T-cell (primary cell): ENCODE measurements at regions of chr2 and their contacts with region 1.

Region 1: DNA sequence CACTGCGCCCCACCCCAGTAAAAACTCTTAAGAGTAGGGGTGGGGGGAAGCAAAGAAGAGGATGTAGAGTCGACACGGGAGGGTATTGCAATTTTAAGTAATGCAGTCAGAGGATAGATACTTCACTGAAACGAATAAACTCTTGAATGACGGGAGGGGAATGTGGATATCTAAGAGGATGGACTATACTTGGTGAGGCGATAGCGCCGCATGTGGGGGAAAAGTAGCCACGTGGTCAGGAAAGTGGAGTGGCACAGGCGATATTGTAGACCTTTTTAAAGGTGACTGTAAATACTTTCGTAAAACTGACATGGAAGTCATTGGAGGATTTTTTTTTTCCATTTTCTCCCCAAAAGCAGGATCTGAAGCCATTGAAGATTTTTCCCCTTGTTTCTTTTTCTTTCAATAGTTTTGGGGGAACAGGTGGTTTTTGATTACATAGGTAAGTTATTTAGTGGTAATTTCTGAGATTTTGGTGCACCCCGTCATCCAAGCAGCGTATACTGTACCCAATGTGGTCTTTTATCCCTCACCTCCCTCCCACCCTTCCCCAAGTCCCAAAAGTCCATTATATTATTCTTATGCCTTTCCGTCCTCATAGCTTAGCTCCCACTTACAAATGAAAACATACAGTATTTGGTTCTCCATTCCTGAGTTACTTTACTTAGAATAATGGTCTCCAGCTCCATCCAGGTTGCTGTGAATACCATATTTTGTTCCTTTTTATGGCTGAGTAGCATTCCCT is 13.8 kb downstream of the CLK1 start:
- DNase-seq: no peak
- ATAC-seq: no peak
- H3K4me3 ChIP-seq: no peak overlapping the region
- H3K4me3 Mint-ChIP-seq: peak overlapping the region in 1 of 3 donors; percentile 31
- H3K27ac ChIP-seq: no peak overlapping the region
- H3K27ac Mint-ChIP-seq: peak overlapping the region; percentile 16 to 27
- H3K4me1 ChIP-seq: peaks cover 0 to 6% of the 10 kb centered on the region in 2 experiments
- H3K4me1 Mint-ChIP-seq: peaks cover 6 to 23% (median 11%) of the 10 kb centered on the region in 3 donors
- H3K27me3 ChIP-seq: no peaks in the 10 kb centered on the region
- H3K27me3 Mint-ChIP-seq: no peaks in the 10 kb centered on the region

Region 2: GRCh38 chr2:201057087-201057521 is 206.4 kb after region 1 on chr2:
- CTCF ChIA-PET with region 1: no interaction called
- POLR2A ChIA-PET with region 1: interaction called in 1 of 2 experiments, 11 read pairs
- DNase-seq: no peak
- ATAC-seq: no peak
- H3K4me3 ChIP-seq: no peak overlapping the region
- H3K4me3 Mint-ChIP-seq: no peak overlapping the region
- H3K27ac ChIP-seq: no peak overlapping the region
- H3K27ac Mint-ChIP-seq: peak overlapping the region in 1 of 2 donors; percentile 36
- H3K4me1 ChIP-seq: peaks cover 0 to 2% of the 10 kb centered on the region in 2 experiments
- H3K4me1 Mint-ChIP-seq: peaks cover 39 to 47% (median 46%) of the 10 kb centered on the region in 3 donors
- H3K27me3 ChIP-seq: no peaks in the 10 kb centered on the region
- H3K27me3 Mint-ChIP-seq: no peaks in the 10 kb centered on the region